ENCODE measurements at regions of chr20 and their contacts with region 1.

Region 1: DNA sequence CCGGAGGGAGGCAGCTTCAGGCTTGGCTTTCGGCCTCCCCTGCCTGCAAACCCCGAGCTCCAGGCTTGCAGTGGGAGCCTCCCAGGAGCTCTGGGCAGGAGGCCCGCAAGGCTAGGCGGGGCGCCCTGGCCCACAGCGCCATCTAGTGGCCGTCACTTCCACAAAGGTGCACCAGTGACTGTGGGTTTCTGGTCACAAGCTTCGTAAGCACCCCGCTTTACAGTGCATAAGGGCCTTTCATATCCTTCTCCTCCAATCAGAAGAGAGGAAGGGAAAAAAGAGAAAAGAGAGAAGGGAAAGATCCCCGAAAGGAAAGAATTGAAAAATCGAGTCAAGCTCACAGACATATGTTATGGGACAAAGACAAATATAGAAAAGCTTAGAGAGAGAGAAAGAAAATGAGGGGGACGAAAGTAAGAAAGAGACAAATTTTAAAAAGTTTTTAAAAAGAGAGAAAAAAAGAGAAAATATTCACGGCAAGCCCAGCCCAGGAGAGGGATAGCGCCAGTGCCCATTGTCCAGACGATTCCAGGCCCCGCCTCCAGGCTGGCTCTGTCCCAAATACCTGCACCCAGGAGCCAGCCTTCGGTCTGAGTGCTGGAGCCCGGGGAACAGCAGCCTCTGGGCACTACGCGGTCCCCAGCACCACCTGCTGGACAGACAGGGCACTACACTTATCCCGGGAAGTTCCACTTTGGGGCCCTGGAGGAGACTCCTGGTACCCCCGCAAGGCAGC is 207.1 kb downstream of the PREX1 start:
- DNase-seq: peak; percentile 15
- H3K4me3 ChIP-seq: peak overlapping the region; percentile 24
- H3K27me3 ChIP-seq: peaks cover 4% of the 10 kb centered on the region
- CTCF ChIP-seq: peak; percentile 95

Region 2: DNA sequence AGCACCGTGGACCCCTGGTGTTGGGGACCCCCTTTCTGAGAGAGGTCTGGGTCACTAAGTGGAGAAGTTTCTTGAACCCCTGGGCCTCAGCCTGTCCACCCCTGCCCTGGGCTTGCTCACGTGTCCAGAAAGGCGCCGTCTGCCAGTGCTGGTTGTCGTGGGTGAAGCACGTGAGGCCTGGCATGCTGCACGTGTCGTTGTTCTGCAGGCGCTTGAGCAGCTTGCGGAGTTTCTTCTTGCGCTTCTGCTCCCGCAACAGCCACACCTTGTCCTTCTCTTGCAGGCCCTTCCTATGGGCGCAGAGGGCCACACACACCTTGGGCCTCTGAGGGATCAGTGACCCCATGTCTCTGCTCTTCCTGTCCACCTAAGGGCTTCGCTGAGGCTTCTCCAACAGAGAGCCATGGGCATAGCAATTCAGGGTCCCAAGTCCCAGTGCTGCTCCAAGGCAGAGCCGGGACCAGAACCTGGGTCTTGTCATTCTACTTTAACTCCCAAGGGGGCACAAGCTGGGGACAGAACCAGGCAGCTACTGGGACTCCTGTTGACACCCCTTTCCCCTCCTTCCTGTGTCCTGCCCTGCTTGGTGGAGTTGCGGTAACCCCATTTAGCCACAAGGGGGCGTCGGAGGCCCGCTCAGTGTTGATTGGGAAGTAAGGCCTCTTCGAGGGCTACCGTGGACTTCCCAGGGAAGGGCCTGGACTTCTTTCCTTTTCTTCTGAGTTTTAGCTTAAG is 957.2 kb before region 1 on chr20:
- CTCF ChIA-PET with region 1: interaction called, 163 read pairs
- POLR2A ChIA-PET with region 1: no interaction called
- DNase-seq: no peak
- H3K4me3 ChIP-seq: no peak overlapping the region
- H3K27me3 ChIP-seq: no peaks in the 10 kb centered on the region
- CTCF ChIP-seq: peak; percentile 96

Region 3: GRCh38 chr20:47717421-47717820 is 903.3 kb before region 1 on chr20:
- CTCF ChIA-PET with region 1: interaction called, 18 read pairs
- POLR2A ChIA-PET with region 1: no interaction called
- DNase-seq: no peak
- H3K4me3 ChIP-seq: no peak overlapping the region
- H3K27me3 ChIP-seq: 0 out of 2 replicates have a peak, but pooled peaks cover 3% of the 10 kb centered on the region
- CTCF ChIP-seq: no peak

Region 4: GRCh38 chr20:47767972-47768794 is 852.5 kb before region 1 on chr20:
- CTCF ChIA-PET with region 1: interaction called, 11 read pairs
- POLR2A ChIA-PET with region 1: no interaction called
- DNase-seq: no peak
- H3K4me3 ChIP-seq: no peak overlapping the region
- H3K27me3 ChIP-seq: no peaks in the 10 kb centered on the region
- CTCF ChIP-seq: no peak

Region 5: GRCh38 chr20:47785854-47786764 is 834.6 kb before region 1 on chr20:
- CTCF ChIA-PET with region 1: interaction called, 95 read pairs
- POLR2A ChIA-PET with region 1: no interaction called
- DNase-seq: no peak
- H3K4me3 ChIP-seq: peak overlapping the region; percentile 59
- H3K27me3 ChIP-seq: peaks cover 10% of the 10 kb centered on the region
- CTCF ChIP-seq: peak; percentile 80

Region 6: GRCh38 chr20:48271721-48272488 is 348.8 kb before region 1 on chr20:
- CTCF ChIA-PET with region 1: no interaction called
- POLR2A ChIA-PET with region 1: no interaction called
- DNase-seq: no peak
- H3K4me3 ChIP-seq: no peak overlapping the region
- H3K27me3 ChIP-seq: peaks cover 8% of the 10 kb centered on the region
- CTCF ChIP-seq: no peak

Region 7: DNA sequence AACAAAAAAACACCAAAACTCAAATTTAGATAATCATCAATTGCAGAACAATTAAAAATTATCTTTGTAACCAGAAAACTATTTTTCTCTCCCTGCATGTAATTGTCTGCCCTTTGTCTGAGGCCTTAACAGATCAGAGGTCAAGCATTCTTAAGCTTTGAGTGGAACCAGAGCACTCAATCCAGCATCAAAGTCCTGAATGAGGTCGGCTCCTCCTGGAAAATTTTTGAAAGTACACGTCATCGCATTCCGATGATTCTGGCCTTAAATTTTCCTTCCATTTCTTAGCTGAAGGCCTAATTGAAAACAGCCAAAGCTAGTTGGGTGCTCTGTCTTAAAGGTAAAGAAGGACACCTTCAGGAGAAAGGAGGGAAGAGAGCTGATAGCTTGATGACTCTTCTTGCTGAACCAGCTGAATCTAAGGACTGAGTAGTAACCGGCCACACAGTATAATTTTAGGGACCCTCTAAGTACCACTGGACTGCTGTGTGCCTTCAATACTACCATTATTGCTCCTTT is 325.2 kb before region 1 on chr20:
- CTCF ChIA-PET with region 1: interaction called, 57 read pairs
- POLR2A ChIA-PET with region 1: interaction called, 3 read pairs
- DNase-seq: peak; percentile 90
- H3K4me3 ChIP-seq: no peak overlapping the region
- H3K27me3 ChIP-seq: no peaks in the 10 kb centered on the region
- CTCF ChIP-seq: peak; percentile 50

Region 8: GRCh38 chr20:48673556-48673955 is 52.9 kb after region 1 on chr20:
- CTCF ChIA-PET with region 1: no interaction called
- POLR2A ChIA-PET with region 1: no interaction called
- DNase-seq: no peak
- H3K4me3 ChIP-seq: no peak overlapping the region
- H3K27me3 ChIP-seq: no peaks in the 10 kb centered on the region
- CTCF ChIP-seq: no peak

Measured in BJ (cell line).